ENCODE measurements at regions of chr7 and their contacts with region 1.

Region 1: GRCh38 chr7:6323967-6324701 is 51.7 kb upstream of the CYTH3 start:
- DNase-seq: no peak
- H3K4me3 ChIP-seq: no peak overlapping the region
- H3K27ac ChIP-seq: no peak overlapping the region
- H3K4me1 ChIP-seq: no peaks in the 10 kb centered on the region
- H3K27me3 ChIP-seq: no peaks in the 10 kb centered on the region
- CTCF ChIP-seq: no peak
- EP300 ChIP-seq: no peak
- POLR2A ChIP-seq: no peak

Region 2: DNA sequence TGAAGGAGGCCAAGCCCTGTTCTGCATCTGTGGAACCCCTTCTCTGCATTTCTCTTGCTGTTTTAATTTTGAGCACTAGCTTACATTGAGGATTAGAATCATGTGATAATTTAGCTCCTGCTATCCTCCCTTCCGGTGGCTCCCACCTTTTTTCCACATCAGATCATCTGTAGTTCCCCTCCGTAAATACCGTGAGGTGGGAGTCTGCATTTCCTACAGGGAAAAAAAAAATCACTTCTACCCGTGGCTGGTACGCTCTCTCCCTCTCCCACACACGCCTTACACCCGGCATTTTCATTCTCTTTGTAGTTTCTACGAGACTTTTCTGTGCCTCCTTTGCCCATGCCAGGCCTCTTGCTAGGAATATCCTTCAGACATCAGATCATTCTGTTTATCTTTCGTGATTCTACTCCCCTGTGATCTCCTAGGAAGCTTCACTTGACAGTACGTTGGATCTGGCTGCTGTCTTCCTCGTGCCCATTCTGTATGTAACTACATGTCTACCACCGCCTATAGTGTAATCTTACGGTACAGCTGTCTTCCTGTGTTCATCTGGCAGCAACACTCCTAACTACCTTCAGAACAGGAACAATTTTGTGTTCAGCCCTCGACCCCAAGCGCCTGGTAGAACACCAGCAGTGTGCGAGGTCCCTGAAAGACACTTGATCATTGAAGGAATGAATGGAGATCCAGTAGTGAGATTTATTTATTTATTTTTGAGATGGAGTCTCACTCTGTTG is 485.2 kb before region 1 on chr7:
- intact Hi-C with region 1: no loop called
- DNase-seq: no peak
- H3K4me3 ChIP-seq: no peak overlapping the region
- H3K27ac ChIP-seq: no peak overlapping the region
- H3K4me1 ChIP-seq: no peaks in the 10 kb centered on the region
- H3K27me3 ChIP-seq: no peaks in the 10 kb centered on the region
- CTCF ChIP-seq: no peak
- EP300 ChIP-seq: no peak
- POLR2A ChIP-seq: no peak

Region 3: GRCh38 chr7:5997222-5997808 is 326.8 kb before region 1 on chr7:
- intact Hi-C with region 1: loop called in 2 of 4 experiments (anchors 10 kb)
- DNase-seq: peak in 4 of 5 donors; percentile 42 to 64 (median 52)
- H3K4me3 ChIP-seq: no peak overlapping the region
- H3K27ac ChIP-seq: no peak overlapping the region
- H3K4me1 ChIP-seq: no peaks in the 10 kb centered on the region
- H3K27me3 ChIP-seq: no peaks in the 10 kb centered on the region
- CTCF ChIP-seq: peak; percentile 41 to 46 (median 42)
- EP300 ChIP-seq: no peak
- POLR2A ChIP-seq: no peak

Region 4: DNA sequence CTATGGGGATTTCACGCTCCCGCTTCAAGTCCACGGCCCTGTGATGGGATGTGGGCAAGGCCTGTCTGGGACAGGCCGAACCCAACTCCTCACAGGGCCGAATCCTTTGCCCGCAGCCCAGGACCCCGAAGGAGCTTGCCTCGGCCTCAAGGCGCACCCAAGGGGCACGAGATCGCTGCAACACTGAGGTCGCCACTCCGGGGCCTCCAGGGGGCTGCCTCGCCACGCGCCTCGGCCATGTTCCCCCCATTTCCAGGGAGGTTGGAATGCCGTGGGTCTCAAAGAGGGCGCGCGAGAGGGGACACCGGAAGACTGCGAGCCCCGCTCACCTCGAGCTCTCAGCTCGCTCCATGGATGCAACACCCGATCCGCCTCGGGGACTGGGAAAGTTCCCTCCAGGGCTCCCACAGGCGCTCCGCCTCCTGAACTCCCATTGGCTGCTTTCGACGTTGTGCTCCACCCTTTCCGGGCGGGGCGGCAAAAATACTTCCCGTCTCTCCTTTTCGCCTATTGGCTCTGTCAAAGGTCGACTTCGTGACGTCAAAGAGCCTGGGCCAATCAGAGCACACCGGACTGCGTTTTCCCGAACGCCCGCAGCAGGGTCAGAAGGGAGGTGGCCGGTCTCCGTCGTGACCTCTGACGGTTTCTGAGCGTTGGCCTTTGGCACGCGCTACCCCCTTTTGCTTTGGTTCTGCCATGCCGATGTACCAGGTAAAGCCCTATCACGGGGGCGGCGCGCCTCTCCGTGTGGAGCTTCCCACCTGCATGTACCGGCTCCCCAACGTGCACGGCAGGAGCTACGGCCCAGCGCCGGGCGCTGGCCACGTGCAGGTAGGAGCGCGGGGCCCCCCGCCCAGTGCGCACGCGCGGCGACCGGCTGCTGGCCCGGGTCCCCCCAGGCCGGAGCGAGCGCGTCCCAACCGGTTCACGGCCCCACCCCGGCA is 315.2 kb before region 1 on chr7 and contains the starts of genes AIMP2 and PMS2:
- intact Hi-C with region 1: loop called in 1 of 4 experiments (anchors 10 kb)
- DNase-seq: peak; percentile 97 to 99 (median 98)
- H3K4me3 ChIP-seq: peak within 1 kb of the TSS; percentile 56
- H3K27ac ChIP-seq: peak within 1 kb of the TSS; percentile 49 to 91
- H3K4me1 ChIP-seq: peaks cover 3% of the 10 kb centered on the region
- H3K27me3 ChIP-seq: no peaks in the 10 kb centered on the region
- CTCF ChIP-seq: no peak
- EP300 ChIP-seq: no peak
- POLR2A ChIP-seq: peak; percentile 57
- total RNA-seq, gene AIMP2: 16.1 to 37.1 (median 17.8) TPM
- total RNA-seq, gene PMS2: 5.2 to 14.5 (median 9.0) TPM

Region 5: GRCh38 chr7:6160191-6160623 is 163.9 kb before region 1 on chr7:
- intact Hi-C with region 1: loop called (anchors 2 to 5 kb)
- DNase-seq: peak; percentile 73 to 82 (median 75)
- H3K4me3 ChIP-seq: no peak overlapping the region
- H3K27ac ChIP-seq: no peak overlapping the region
- H3K4me1 ChIP-seq: no peaks in the 10 kb centered on the region
- H3K27me3 ChIP-seq: no peaks in the 10 kb centered on the region
- CTCF ChIP-seq: peak; percentile 65 to 68 (median 68)
- EP300 ChIP-seq: no peak
- POLR2A ChIP-seq: no peak